Motor neuron (in vitro differentiated cells): ENCODE measurements at regions of chr5 and their contacts with region 1.

Region 1: GRCh38 chr5:36739751-36740221 is 133.4 kb downstream of the SLC1A3 start:
- ATAC-seq: peak in 3 of 8 experiments; percentile 39 to 52 (median 40)
- H3K4me3 ChIP-seq: no peak overlapping the region
- H3K27ac ChIP-seq: no peak overlapping the region
- H3K4me1 ChIP-seq: peaks cover 0 to 5% of the 10 kb centered on the region in 2 donors

Region 2: GRCh38 chr5:36870399-36871040 is 130.7 kb after region 1 on chr5:
- in situ Hi-C with region 1: loop called in 2 of 9 experiments (anchors 25 kb)
- ATAC-seq: peak in 6 of 8 experiments; percentile 56 to 79 (median 64)
- H3K4me3 ChIP-seq: no peak overlapping the region
- H3K27ac ChIP-seq: no peak overlapping the region
- H3K4me1 ChIP-seq: peaks cover 2 to 20% of the 10 kb centered on the region in 2 donors

Region 3: DNA sequence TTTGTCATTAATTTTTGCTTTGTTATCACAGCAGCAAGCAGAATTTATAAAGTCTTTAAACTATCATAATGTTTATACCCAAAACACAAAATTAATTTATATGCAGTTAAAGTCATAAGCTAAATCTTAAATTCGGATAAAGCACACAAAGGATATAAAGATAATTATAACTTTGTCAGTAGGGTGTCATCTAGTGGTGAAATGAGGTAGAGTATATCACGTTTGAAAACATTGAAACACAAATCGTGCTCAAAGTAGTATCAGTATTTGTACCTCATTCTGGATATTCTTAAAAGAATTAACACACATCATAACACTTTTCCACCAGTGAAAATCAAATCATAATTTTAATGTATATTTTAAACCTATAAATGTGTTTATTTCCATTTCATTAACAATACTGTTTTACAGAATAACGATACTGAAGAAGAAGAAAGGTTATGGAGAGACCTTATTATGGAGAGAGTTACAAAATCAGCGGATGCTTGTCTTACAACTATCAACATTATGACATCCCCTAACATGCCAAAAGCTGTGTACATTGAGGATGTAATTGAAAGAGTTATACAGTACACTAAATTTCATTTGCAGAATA is 266.3 kb after region 1 on chr5:
- in situ Hi-C with region 1: loop called in 1 of 9 experiments (anchors 25 kb)
- ATAC-seq: peak in 2 of 8 experiments; percentile 34 to 43
- H3K4me3 ChIP-seq: no peak overlapping the region
- H3K27ac ChIP-seq: no peak overlapping the region
- H3K4me1 ChIP-seq: no peaks in the 10 kb centered on the region